T-cell (primary cell): ENCODE measurements at regions of chr5 and their contacts with region 1.

Region 1: DNA sequence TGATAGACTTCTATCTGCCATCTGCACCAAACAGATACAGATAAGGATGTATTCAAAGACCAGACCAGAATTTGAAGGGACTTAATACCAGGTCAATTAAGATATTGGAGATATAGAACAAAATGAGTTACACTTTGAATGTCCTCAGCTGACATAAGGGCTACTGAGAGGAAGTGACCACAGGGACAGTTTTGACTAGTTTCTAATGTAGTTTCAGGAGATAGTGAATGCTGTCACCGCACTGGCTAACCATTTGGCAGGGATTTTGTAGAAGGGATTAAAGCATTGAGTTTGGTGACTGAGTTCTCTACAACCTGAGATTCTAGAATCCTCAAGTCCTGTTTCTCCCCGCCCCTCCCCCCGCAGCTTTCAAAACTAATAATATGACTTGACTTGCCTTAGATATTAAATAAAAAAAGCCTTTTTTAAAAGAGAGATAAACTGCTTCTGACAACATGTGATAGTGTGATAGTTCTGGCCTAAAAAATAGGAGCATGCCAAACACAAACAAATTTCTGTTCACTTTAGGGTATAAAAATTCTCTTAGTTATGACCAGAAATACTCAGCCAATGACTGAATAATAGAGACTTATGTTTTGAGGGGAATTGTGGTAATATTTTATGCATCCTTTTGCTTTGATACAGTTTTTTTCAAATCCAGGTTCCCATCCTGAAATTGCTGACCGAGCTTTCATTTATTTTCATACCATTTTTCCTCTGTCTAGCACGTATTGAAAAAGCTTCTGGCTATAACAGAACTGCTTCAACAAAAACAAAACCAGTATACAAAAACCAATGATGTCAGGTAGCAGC is 22.4 kb downstream of the CCNH start:
- DNase-seq: no peak
- ATAC-seq: peak in 1 of 4 experiments; percentile 6
- H3K4me3 ChIP-seq: no peak overlapping the region
- H3K4me3 Mint-ChIP-seq: no peak overlapping the region
- H3K27ac ChIP-seq: peak overlapping the region; percentile 1
- H3K27ac Mint-ChIP-seq: peak overlapping the region; percentile 16 to 56
- H3K4me1 ChIP-seq: no peaks in the 10 kb centered on the region
- H3K4me1 Mint-ChIP-seq: peaks cover 13 to 32% (median 25%) of the 10 kb centered on the region in 3 donors
- H3K27me3 ChIP-seq: no peaks in the 10 kb centered on the region
- H3K27me3 Mint-ChIP-seq: no peaks in the 10 kb centered on the region

Region 2: DNA sequence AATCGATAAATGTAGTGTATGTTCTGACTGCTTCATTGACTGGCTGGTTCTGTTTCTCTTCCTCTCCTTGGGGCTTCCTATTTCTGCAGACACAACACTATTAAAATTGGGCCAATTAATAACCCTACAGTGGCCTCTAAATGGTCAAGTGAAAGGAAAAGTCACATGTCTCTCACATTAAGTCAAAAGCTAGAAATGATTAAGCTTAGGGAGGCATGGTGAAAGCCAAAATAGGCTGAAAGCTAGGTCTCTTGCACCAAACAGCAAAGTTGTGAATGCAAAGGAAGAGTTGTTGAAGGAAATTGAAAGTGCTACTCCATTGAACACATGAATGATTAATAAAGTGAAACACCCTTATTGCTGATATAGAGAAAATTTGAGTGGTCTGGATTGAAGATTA is 35.8 kb before region 1 on chr5:
- CTCF ChIA-PET with region 1: no interaction called
- POLR2A ChIA-PET with region 1: interaction called, 3 to 10 read pairs
- DNase-seq: no peak
- ATAC-seq: no peak
- H3K4me3 ChIP-seq: no peak overlapping the region
- H3K4me3 Mint-ChIP-seq: no peak overlapping the region
- H3K27ac ChIP-seq: no peak overlapping the region
- H3K27ac Mint-ChIP-seq: peak overlapping the region in 1 of 2 donors; percentile 56
- H3K4me1 ChIP-seq: no peaks in the 10 kb centered on the region
- H3K4me1 Mint-ChIP-seq: peaks cover 21 to 24% (median 24%) of the 10 kb centered on the region in 3 donors
- H3K27me3 ChIP-seq: no peaks in the 10 kb centered on the region
- H3K27me3 Mint-ChIP-seq: no peaks in the 10 kb centered on the region